GM12878 (cell line): ENCODE measurements at regions of chr13 and their contacts with region 1.

Region 1: GRCh38 chr13:110715395-110716235 is 2.1 kb downstream of the ING1 start:
- DNase-seq: peak; percentile 99
- ATAC-seq: peak; percentile 74
- H3K4me3 ChIP-seq: peak overlapping the region; percentile 95
- H3K27ac ChIP-seq: peak overlapping the region; percentile 91
- H3K4me1 ChIP-seq: peaks cover 5% of the 10 kb centered on the region
- H3K27me3 ChIP-seq: no peaks in the 10 kb centered on the region
- CTCF ChIP-seq: peak; percentile 11 to 19 (median 14); a peak in 2 of 6 replicates
- EP300 ChIP-seq: no peak
- POLR2A ChIP-seq: no peak; the same call in 1 of the 2 replicates
- RAD21 ChIP-seq: no peak

Region 2: DNA sequence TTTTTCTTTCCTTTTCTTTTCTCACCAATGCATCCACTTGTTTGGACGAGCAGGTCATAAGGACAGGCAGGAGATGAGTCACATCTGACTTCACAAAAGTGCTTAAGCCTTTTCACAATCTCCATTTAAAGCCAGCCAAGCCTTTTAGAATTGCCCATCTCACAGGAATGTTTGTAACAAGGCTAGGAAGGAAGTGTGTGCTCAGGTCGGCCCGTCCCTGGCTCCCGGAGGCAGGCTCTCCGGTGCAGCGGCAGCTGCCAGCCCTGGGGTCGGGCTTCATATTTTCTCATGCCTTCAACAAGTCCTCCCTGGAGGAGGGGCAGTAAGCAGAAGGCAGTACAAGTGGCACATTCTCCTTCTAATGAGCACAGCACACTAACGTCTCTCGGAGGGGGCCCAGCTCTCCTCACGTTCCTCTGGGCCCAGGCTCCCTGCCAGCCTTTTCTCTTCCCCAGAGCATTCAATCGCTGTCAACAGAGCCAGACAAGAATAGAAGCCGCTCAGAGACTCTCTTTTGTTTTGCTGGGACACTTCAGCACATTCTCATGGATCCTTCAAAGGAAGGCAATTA is 589.1 kb before region 1 on chr13:
- CTCF ChIA-PET with region 1: no interaction called
- POLR2A ChIA-PET with region 1: no interaction called
- RAD21 ChIA-PET with region 1: no interaction called
- SMC1A ChIA-PET with region 1: no interaction called
- in situ Hi-C with region 1: no loop called
- intact Hi-C with region 1: loop called (anchors 10 kb)
- DNase-seq: no peak
- ATAC-seq: peak; percentile 1; the same call in 1 of the 3 replicates
- H3K4me3 ChIP-seq: no peak overlapping the region
- H3K27ac ChIP-seq: no peak overlapping the region; the same call in 1 of the 2 replicates
- H3K4me1 ChIP-seq: peaks cover 3% of the 10 kb centered on the region; the same call in 1 of the 2 replicates
- H3K27me3 ChIP-seq: no peaks in the 10 kb centered on the region
- CTCF ChIP-seq: no peak
- EP300 ChIP-seq: no peak
- POLR2A ChIP-seq: no peak
- RAD21 ChIP-seq: no peak

Region 3: DNA sequence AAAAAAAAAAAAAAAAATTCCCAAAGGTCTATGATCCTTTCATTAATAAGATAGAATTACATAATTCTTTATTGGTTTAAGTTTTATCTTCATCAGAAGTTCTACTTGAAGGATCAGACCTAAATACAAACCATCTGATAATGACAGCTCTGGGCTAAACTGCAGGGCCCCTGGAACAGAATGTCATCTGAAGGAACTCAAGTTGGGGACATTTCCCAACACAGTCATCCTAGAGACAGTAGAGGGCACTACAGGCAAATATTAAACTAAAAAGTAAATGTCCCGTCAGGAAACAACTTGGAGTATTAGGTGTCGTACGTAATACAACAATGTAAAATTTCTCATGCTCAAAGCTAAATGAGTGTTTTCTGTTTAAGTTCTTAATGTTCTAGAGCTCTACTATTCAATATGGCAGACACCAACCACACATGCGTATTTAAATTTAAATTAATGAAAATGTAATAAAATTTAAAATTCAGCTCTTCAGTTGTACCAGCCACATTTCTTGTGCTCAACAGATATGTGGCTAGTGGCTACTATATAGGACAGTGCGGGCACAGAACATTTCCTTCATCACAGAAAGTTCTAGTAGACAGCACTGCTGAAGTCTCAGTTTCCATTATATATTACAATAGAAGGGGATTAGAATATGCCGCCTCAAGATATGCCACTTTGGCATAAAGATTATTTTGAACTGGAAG is 122.0 kb before region 1 on chr13:
- CTCF ChIA-PET with region 1: interaction called, 6 read pairs
- POLR2A ChIA-PET with region 1: interaction called, 3 read pairs
- RAD21 ChIA-PET with region 1: interaction called, 3 read pairs
- SMC1A ChIA-PET with region 1: interaction called, 5 read pairs
- in situ Hi-C with region 1: no loop called
- intact Hi-C with region 1: loop called (anchors 5 kb)
- DNase-seq: no peak
- ATAC-seq: peak; percentile 97
- H3K4me3 ChIP-seq: no peak overlapping the region
- H3K27ac ChIP-seq: no peak overlapping the region
- H3K4me1 ChIP-seq: no peaks in the 10 kb centered on the region
- H3K27me3 ChIP-seq: no peaks in the 10 kb centered on the region
- CTCF ChIP-seq: peak; percentile 60 to 71 (median 66)
- EP300 ChIP-seq: no peak
- POLR2A ChIP-seq: no peak
- RAD21 ChIP-seq: peak; percentile 86

Region 4: GRCh38 chr13:110676595-110677587 is 38.7 kb before region 1 on chr13:
- CTCF ChIA-PET with region 1: no interaction called
- POLR2A ChIA-PET with region 1: interaction called, 6 read pairs
- RAD21 ChIA-PET with region 1: no interaction called
- SMC1A ChIA-PET with region 1: interaction called, 3 read pairs
- in situ Hi-C with region 1: no loop called
- intact Hi-C with region 1: loop called (anchors 2 kb)
- DNase-seq: peak; percentile 63
- ATAC-seq: peak; percentile 89
- H3K4me3 ChIP-seq: peak overlapping the region; percentile 24; the same call in 1 of the 2 replicates
- H3K27ac ChIP-seq: peak overlapping the region; percentile 86
- H3K4me1 ChIP-seq: peaks cover 16% of the 10 kb centered on the region
- H3K27me3 ChIP-seq: no peaks in the 10 kb centered on the region
- CTCF ChIP-seq: no peak
- EP300 ChIP-seq: no peak
- POLR2A ChIP-seq: 0 out of 2 replicates have a peak, but pooled peaks have one; percentile 16
- RAD21 ChIP-seq: no peak

Region 5: DNA sequence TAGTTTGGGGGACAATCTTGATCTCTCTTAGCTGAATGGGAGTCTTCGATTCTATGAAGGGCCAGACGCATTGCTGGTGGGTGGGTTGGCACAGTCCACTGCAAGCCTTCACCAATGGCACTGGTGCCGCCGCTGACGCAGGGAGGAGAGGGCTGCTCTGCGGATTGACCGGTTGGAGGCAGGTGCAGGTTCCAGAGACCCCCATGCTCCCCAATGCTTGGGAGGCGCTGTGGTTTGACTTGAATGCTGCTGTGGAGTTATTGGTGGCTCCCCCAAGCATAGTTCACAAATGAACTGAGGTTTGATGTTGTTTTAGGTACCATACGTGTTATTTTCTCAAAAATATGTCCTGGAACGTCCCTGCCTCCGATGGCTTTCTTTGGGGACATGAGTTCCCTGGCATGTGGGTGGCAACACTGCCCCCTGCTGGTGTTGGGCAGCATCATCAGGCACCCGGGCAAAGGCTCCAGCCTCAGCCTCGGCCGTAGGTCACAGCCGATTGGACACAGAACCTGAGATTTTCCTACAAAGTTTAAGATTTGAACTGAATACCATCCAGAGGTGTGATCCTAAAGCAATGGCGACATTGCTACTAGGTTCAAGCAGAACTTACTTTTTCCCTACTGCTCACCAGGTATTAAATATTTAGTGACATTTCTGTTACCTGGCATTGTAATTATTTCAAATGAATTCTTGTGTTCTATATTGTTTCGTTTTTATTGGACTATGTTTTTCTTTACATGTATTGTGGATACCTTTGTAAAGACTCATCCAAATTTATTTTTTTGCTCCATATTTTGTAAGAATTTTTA is 103.8 kb after region 1 on chr13:
- CTCF ChIA-PET with region 1: interaction called, 23 read pairs
- POLR2A ChIA-PET with region 1: interaction called, 6 read pairs
- RAD21 ChIA-PET with region 1: interaction called, 8 read pairs
- SMC1A ChIA-PET with region 1: interaction called, 12 read pairs
- in situ Hi-C with region 1: no loop called
- intact Hi-C with region 1: loop called (anchors 1 kb)
- DNase-seq: peak; percentile 39
- ATAC-seq: peak; percentile 96
- H3K4me3 ChIP-seq: no peak overlapping the region
- H3K27ac ChIP-seq: no peak overlapping the region
- H3K4me1 ChIP-seq: 0 out of 2 replicates have a peak, but pooled peaks cover 5% of the 10 kb centered on the region
- H3K27me3 ChIP-seq: no peaks in the 10 kb centered on the region
- CTCF ChIP-seq: peak; percentile 96 to 97 (median 97)
- EP300 ChIP-seq: no peak
- POLR2A ChIP-seq: no peak
- RAD21 ChIP-seq: peak; percentile 90

Region 6: DNA sequence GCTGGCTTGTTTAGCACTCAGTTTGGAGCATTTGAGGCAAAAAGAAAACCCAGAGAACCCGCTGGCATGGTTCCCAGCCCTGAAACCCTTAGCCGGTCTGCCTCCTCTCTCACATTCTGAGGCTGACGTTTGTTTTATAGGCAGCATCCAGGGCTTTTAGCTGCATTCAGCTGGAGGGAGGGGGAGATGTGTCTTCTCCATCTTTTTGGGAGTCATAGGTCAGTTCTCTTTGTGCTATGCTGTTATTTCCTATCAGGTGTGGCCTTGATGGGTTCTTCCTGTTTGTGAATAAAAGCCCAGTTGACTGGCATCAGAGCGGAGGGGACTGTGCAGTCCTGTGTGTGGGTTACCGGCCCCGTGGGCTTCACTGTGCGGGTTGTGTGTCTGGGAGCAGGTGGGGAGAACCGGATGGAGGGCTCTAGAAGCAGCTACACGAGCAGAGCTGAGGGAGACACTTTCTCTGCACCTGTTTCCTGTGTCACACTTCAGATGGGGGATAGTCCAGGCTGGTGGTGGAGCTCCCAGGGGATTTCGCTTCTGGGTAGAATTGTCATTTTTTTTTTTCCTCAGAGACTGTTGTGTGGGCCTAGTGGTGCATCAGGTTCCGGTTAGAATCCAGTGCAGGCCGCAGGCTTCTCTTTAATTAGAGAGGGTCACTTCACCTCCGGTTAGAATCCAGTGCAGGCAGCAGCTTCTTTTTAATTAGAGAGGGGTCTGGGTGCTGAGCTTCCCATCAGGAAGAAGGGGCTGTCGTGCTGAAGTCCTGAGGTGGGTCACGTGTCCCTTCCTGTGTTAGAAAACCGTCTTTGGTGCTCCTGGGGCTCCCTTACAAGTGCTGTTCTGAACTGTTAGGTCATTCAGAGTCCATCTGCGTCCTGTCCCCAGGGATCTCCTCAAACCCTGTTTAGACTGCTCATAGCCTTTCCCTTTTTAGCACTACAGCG is 469.1 kb after region 1 on chr13:
- CTCF ChIA-PET with region 1: no interaction called
- POLR2A ChIA-PET with region 1: no interaction called
- RAD21 ChIA-PET with region 1: no interaction called
- SMC1A ChIA-PET with region 1: interaction called, 5 read pairs
- in situ Hi-C with region 1: no loop called
- intact Hi-C with region 1: loop called (anchors 10 kb)
- DNase-seq: peak; percentile 93
- ATAC-seq: peak; percentile 91
- H3K4me3 ChIP-seq: peak overlapping the region; percentile 67
- H3K27ac ChIP-seq: peak overlapping the region; percentile 70
- H3K4me1 ChIP-seq: peaks cover 47% of the 10 kb centered on the region
- H3K27me3 ChIP-seq: no peaks in the 10 kb centered on the region
- CTCF ChIP-seq: no peak
- EP300 ChIP-seq: peak; percentile 59 to 77; a peak in 3 of 4 replicates
- POLR2A ChIP-seq: peak; percentile 58
- RAD21 ChIP-seq: no peak